Panc1 (cell line): ENCODE measurements at regions of chr4 and their contacts with region 1.

Region 1: GRCh38 chr4:152083338-152083737 is 322.5 kb upstream of the GATB start:
- DNase-seq: no peak
- ATAC-seq: no peak
- H3K4me3 ChIP-seq: no peak overlapping the region
- H3K27ac ChIP-seq: no peak overlapping the region
- H3K4me1 ChIP-seq: no peaks in the 10 kb centered on the region
- H3K27me3 ChIP-seq: no peaks in the 10 kb centered on the region
- CTCF ChIP-seq: no peak

Region 2: DNA sequence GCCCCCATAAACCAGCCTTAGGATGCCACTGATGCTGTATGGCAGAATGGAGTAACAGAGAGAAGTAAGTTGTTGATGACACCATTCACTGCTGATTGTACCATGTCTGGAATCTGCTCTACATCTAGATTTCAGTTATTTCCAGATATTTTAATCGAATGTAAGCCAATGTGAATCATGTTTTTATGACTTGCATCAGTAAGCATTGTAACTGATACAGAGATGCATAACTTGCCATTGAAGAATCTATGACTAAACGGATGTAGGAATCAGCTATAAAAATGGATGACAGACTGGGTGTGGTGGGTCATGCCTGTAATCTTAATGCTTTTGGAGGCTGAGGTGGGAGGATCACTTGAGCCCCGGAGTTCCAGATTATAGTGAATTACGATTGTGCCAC is 161.5 kb before region 1 on chr4:
- CTCF ChIA-PET with region 1: no interaction called
- POLR2A ChIA-PET with region 1: no interaction called
- in situ Hi-C with region 1: no loop called
- intact Hi-C with region 1: no loop called
- DNase-seq: no peak
- ATAC-seq: no peak
- H3K4me3 ChIP-seq: no peak overlapping the region
- H3K27ac ChIP-seq: no peak overlapping the region
- H3K4me1 ChIP-seq: no peaks in the 10 kb centered on the region
- H3K27me3 ChIP-seq: no peaks in the 10 kb centered on the region
- CTCF ChIP-seq: no peak

Region 3: DNA sequence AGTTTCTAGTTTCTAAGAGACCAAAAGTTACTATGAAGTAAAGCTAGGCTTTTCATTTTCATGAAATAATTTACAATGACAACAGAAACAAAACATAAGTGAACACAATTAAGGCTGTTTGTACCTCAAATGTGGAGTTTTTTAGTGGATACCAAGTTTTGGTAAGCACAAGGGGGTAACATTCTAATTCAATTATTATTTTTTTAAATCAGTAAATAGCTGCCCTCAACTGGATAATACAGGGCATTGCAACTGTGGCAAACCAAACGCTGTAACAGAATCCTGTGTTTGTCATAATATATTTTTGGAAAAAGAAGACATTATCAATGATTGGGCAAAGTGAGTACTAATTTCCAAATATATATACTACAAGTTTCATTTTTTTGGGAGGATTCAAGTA is 302.2 kb after region 1 on chr4:
- CTCF ChIA-PET with region 1: no interaction called
- POLR2A ChIA-PET with region 1: interaction called, 12 read pairs
- in situ Hi-C with region 1: no loop called
- intact Hi-C with region 1: no loop called
- DNase-seq: no peak
- ATAC-seq: no peak
- H3K4me3 ChIP-seq: no peak overlapping the region
- H3K27ac ChIP-seq: no peak overlapping the region
- H3K4me1 ChIP-seq: no peaks in the 10 kb centered on the region
- H3K27me3 ChIP-seq: no peaks in the 10 kb centered on the region
- CTCF ChIP-seq: peak; percentile 58; the same call in 1 of the 2 replicates

Region 4: DNA sequence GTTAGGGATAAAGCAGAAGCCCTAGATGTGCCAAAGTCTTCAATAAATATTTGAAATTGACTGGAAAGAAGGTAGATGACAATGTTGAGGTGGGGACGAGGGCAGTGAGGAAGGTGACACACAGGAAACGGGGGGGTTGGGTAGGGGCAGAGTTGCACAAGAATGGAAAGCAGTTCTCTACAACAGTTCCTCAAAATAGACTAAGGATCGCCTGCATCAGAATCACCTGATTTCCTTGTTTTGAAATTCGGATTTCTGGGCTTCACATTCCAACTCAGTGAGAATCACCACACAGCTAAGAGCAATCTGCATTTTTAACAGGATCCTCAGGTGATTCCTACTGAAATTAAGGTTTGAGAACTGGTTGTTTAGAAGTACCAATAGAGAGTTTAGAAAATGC is 767.0 kb after region 1 on chr4:
- CTCF ChIA-PET with region 1: no interaction called
- POLR2A ChIA-PET with region 1: no interaction called
- in situ Hi-C with region 1: no loop called
- intact Hi-C with region 1: no loop called
- DNase-seq: peak; percentile 17
- ATAC-seq: no peak
- H3K4me3 ChIP-seq: no peak overlapping the region
- H3K27ac ChIP-seq: no peak overlapping the region
- H3K4me1 ChIP-seq: no peaks in the 10 kb centered on the region; the same call in 1 of the 2 replicates
- H3K27me3 ChIP-seq: no peaks in the 10 kb centered on the region
- CTCF ChIP-seq: no peak